ENCODE measurements at regions of chr5 and their contacts with region 1.

Region 1: GRCh38 chr5:131634996-131635754 is at the start of gene RAPGEF6:
- DNase-seq: peak; percentile 98
- ATAC-seq: peak; percentile 96 to 97
- total RNA-seq, gene RAPGEF6: 8.4 to 14.6 TPM

Region 2: GRCh38 chr5:131595088-131596033 is 39.8 kb before region 1 on chr5:
- intact Hi-C with region 1: loop called in 1 of 2 experiments (anchors 5 kb)
- DNase-seq: no peak
- ATAC-seq: no peak

Region 3: DNA sequence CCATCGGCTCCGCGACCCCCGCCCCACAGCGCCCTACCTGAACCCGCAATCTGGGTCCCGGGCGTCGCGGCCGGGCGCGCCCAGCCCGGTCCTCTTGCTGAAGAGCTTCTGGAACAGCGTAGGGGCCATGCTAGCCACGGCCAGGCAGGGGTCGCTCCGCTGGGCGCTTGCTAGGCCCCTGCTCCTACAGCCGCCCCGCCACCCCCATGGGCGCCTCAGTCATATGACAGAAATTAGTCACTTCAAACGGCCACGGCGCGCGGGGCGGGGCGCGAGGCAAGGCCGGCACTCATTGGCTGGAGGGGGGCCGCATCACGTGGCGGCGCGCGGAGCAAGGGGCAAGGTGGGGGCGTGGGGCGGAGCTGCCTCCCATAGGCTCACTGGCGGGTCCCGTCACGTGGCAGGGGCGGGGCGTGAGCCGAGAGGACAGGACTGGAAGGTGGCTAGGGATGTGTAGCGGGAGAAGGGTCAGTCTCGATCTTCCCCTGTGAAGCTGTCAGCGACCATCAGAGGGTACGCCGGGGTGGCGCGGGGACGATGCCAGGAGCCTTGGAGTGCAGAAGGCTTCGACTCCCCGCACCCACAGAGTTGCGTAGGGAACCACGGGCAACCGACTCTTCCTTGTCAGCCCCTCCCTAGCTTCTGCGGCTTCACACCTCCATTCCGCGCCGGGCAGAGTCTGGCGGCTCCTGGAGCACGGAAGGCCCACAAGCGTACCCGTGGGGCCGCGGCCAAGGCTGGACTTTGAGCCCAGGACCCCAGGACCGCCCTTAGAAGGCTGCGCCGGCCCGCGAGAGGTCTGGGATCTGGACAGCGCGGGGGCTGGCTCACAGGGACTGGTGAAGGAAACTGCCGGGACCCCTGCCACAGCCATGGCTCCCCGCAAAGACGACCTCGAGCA is 161.9 kb after region 1 on chr5 and contains the start of gene FNIP1:
- intact Hi-C with region 1: loop called in 1 of 2 experiments (anchors 2 kb)
- DNase-seq: peak; percentile 100
- ATAC-seq: peak; percentile 98 to 99
- total RNA-seq, gene FNIP1: 23.5 to 24.2 TPM